ENCODE measurements at regions of chr15 and their contacts with region 1.

Region 1: GRCh38 chr15:49235446-49236124 is 65.5 kb downstream of the GALK2 start:
- DNase-seq: peak in 31 of 35 experiments; percentile 1 to 69 (median 33)
- ATAC-seq: peak; percentile 54 to 74 (median 62)
- H3K4me3 ChIP-seq: no peak overlapping the region
- H3K4me3 Mint-ChIP-seq: no peak overlapping the region
- H3K27ac ChIP-seq: no peak overlapping the region
- H3K27ac Mint-ChIP-seq: peak overlapping the region; percentile 13 to 26
- H3K4me1 ChIP-seq: no peaks in the 10 kb centered on the region
- H3K4me1 Mint-ChIP-seq: peaks cover 10 to 15% (median 12%) of the 10 kb centered on the region in 3 donors
- H3K27me3 ChIP-seq: no peaks in the 10 kb centered on the region
- H3K27me3 Mint-ChIP-seq: no peaks in the 10 kb centered on the region

Region 2: GRCh38 chr15:49421991-49422390 is 186.4 kb after region 1 on chr15:
- CTCF ChIA-PET with region 1: interaction called, 6 to 18 read pairs
- POLR2A ChIA-PET with region 1: no interaction called
- DNase-seq: peak in 27 of 35 experiments; percentile 1 to 62 (median 15)
- ATAC-seq: peak in 3 of 4 experiments; percentile 38 to 56 (median 43)
- H3K4me3 ChIP-seq: no peak overlapping the region
- H3K4me3 Mint-ChIP-seq: peak overlapping the region in 2 of 3 donors; percentile 10 to 34
- H3K27ac ChIP-seq: no peak overlapping the region
- H3K27ac Mint-ChIP-seq: peak overlapping the region in 1 of 2 donors; percentile 40
- H3K4me1 ChIP-seq: no peaks in the 10 kb centered on the region
- H3K4me1 Mint-ChIP-seq: peaks cover 3 to 7% (median 5%) of the 10 kb centered on the region in 3 donors
- H3K27me3 ChIP-seq: peaks cover 0 to 2% of the 10 kb centered on the region in 2 experiments
- H3K27me3 Mint-ChIP-seq: peaks cover 0 to 3% of the 10 kb centered on the region in 2 donors

Region 3: DNA sequence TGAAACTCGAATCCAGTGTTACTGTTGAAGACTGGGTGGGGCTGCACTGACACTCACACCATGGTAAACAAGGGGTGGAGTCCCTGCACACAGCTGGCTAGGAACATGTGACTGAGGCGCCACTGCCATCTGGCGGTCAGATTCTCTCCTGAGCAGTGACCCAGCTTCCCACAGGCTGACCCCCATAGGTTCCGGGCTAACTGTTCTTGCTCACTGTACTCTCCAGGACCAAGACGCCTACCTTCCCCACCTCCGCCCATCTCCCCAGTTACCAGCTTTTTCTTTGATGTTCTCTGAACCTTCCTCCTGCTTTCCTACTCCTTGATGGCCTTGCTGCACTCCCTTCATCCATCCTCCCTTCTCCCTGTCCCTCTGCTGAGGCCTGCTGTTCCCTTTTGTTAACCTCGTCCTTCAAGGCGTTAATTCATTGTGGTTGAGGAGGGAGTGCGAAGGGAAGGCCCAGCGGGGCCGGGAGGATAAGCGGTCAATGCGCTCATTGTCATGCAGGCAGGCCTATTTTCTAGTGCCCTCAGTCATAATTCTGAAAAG is 768.3 kb after region 1 on chr15:
- CTCF ChIA-PET with region 1: interaction called, 3 to 17 read pairs
- POLR2A ChIA-PET with region 1: interaction called in 1 of 2 experiments, 5 read pairs
- DNase-seq: peak; percentile 4 to 75 (median 47)
- ATAC-seq: peak; percentile 77 to 96 (median 83)
- H3K4me3 ChIP-seq: no peak overlapping the region
- H3K4me3 Mint-ChIP-seq: no peak overlapping the region
- H3K27ac ChIP-seq: no peak overlapping the region
- H3K27ac Mint-ChIP-seq: peak overlapping the region in 1 of 2 donors; percentile 46
- H3K4me1 ChIP-seq: peaks cover 0 to 9% of the 10 kb centered on the region in 2 experiments
- H3K4me1 Mint-ChIP-seq: peaks cover 0 to 12% (median 5%) of the 10 kb centered on the region in 3 donors
- H3K27me3 ChIP-seq: no peaks in the 10 kb centered on the region
- H3K27me3 Mint-ChIP-seq: peaks cover 3 to 6% of the 10 kb centered on the region in 2 donors

Measured in T-cell (primary cell).